ENCODE measurements at regions of chr2 and their contacts with region 1.

Region 1: GRCh38 chr2:112254466-112255239 is at the start of gene ZC3H8:
- DNase-seq: peak; percentile 87
- H3K4me3 ChIP-seq: peak within 1 kb of the TSS; percentile 67 to 80 (median 78)
- H3K27ac ChIP-seq: peak within 1 kb of the TSS; percentile 49
- H3K4me1 ChIP-seq: peaks cover 9% of the 10 kb centered on the region
- H3K27me3 ChIP-seq: no peaks in the 10 kb centered on the region
- CTCF ChIP-seq: no peak
- total RNA-seq, gene ZC3H8: 13.8 to 19.9 TPM

Region 2: DNA sequence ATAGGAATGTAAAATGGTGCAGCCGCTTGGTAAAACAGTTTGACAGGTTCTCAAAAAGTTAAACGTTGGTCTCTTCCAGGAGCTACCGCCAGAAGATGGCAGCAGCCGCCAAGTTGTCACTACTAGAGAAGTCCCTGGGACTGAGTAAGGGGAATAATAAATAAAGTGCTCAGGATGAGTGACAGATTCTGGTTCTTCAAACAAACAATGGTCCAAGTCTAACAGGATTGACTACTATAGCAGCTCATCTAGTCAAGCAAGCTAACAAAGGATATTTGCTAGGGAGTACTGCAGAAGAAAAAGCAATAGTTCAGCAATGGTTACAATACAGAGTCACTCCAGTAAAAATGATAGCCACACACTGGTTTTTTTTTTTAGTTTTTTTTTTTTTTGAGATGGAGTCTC is 366.8 kb before region 1 on chr2:
- CTCF ChIA-PET with region 1: no interaction called
- dilution Hi-C with region 1: no loop called
- in situ Hi-C with region 1: no loop called
- intact Hi-C with region 1: loop called (anchors 5 kb)
- DNase-seq: peak; percentile 37
- H3K4me3 ChIP-seq: no peak overlapping the region
- H3K27ac ChIP-seq: no peak overlapping the region
- H3K4me1 ChIP-seq: no peaks in the 10 kb centered on the region
- H3K27me3 ChIP-seq: no peaks in the 10 kb centered on the region
- CTCF ChIP-seq: peak; percentile 57 to 74

Region 3: GRCh38 chr2:112054847-112055729 is 199.6 kb before region 1 on chr2 and contains the start of gene TMEM87B:
- CTCF ChIA-PET with region 1: no interaction called
- dilution Hi-C with region 1: no loop called
- in situ Hi-C with region 1: no loop called
- intact Hi-C with region 1: loop called (anchors 10 kb)
- DNase-seq: peak; percentile 97
- H3K4me3 ChIP-seq: peak within 1 kb of the TSS; percentile 98 to 100 (median 100)
- H3K27ac ChIP-seq: peak within 1 kb of the TSS; percentile 81
- H3K4me1 ChIP-seq: peaks cover 21% of the 10 kb centered on the region
- H3K27me3 ChIP-seq: no peaks in the 10 kb centered on the region
- CTCF ChIP-seq: no peak
- total RNA-seq, gene TMEM87B: 35.0 to 51.7 TPM

Region 4: GRCh38 chr2:112198780-112199179 is 55.9 kb before region 1 on chr2:
- CTCF ChIA-PET with region 1: no interaction called
- dilution Hi-C with region 1: no loop called
- in situ Hi-C with region 1: no loop called
- intact Hi-C with region 1: loop called (anchors 10 kb)
- DNase-seq: peak; percentile 43
- H3K4me3 ChIP-seq: no peak overlapping the region
- H3K27ac ChIP-seq: no peak overlapping the region
- H3K4me1 ChIP-seq: no peaks in the 10 kb centered on the region
- H3K27me3 ChIP-seq: peaks cover 2% of the 10 kb centered on the region
- CTCF ChIP-seq: no peak

Region 5: DNA sequence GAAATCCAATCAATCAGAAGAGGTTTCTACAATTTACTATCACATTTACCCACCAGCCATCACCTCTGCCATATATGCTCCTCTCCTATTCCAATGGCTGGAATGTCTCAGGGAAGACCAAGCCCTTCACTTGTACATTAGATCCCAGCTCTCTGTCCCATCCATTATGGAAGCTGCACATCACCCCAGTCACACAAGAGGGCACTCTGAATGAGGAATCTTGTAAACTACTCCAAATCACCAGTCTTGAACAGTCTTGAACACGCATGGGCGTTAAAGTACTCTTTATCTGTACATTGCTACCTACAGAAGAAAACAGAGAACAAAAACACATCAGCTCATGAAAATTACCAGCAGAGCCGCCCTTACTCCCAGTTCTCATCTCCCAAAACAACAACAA is 38.5 kb before region 1 on chr2:
- CTCF ChIA-PET with region 1: no interaction called
- dilution Hi-C with region 1: no loop called
- in situ Hi-C with region 1: no loop called
- intact Hi-C with region 1: no loop called
- DNase-seq: no peak
- H3K4me3 ChIP-seq: no peak overlapping the region
- H3K27ac ChIP-seq: no peak overlapping the region
- H3K4me1 ChIP-seq: no peaks in the 10 kb centered on the region
- H3K27me3 ChIP-seq: no peaks in the 10 kb centered on the region
- CTCF ChIP-seq: peak; percentile 10 to 40

Region 6: DNA sequence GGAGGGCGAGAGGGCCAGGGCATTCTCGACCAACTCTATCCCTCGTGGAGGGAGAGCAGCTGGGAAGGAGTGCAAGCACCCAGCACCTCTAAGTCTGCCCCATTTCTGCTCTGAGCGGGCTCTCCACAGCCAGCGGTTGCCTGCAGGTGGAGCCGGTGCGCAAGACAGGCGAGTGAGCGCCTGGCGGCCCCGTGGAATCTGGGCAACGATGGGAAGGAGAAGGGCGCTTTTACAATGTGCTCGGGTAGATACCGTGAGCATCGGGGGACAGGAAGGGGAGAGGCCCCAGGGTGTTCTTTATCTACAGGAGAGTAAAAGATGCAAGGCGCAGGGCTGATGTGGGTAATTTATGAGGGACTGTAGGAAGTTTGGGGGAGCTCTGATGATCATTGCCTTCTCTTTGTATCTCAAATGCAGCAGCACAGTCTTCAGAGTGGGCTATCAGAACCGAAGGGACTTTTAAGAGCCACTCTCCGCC is 226.4 kb after region 1 on chr2:
- CTCF ChIA-PET with region 1: no interaction called
- dilution Hi-C with region 1: no loop called
- in situ Hi-C with region 1: no loop called
- intact Hi-C with region 1: loop called (anchors 5 kb)
- DNase-seq: peak; percentile 80
- H3K4me3 ChIP-seq: peak overlapping the region; percentile 58 to 84 (median 76)
- H3K27ac ChIP-seq: peak overlapping the region; percentile 46
- H3K4me1 ChIP-seq: peaks cover 16% of the 10 kb centered on the region
- H3K27me3 ChIP-seq: no peaks in the 10 kb centered on the region
- CTCF ChIP-seq: peak; percentile 71 to 94

Region 7: GRCh38 chr2:112584134-112584890 is 329.7 kb after region 1 on chr2 and contains the start of gene CHCHD5:
- CTCF ChIA-PET with region 1: no interaction called
- dilution Hi-C with region 1: no loop called
- in situ Hi-C with region 1: no loop called
- intact Hi-C with region 1: loop called (anchors 5 kb)
- DNase-seq: peak; percentile 97
- H3K4me3 ChIP-seq: peak within 1 kb of the TSS; percentile 67 to 85 (median 72)
- H3K27ac ChIP-seq: peak within 1 kb of the TSS; percentile 98
- H3K4me1 ChIP-seq: peaks cover 21% of the 10 kb centered on the region
- H3K27me3 ChIP-seq: no peaks in the 10 kb centered on the region
- CTCF ChIP-seq: peak in 1 of 2 donors; percentile 16
- total RNA-seq, gene CHCHD5: 10.2 to 42.6 TPM

Measured in mammary epithelial cell (primary cell).